AG04449 (cell line): ENCODE measurements at regions of chr1 and their contacts with region 1.

Region 1: GRCh38 chr1:111507411-111508201 is 4.2 kb upstream of the ADORA3 start:
- DNase-seq: no peak
- H3K4me3 ChIP-seq: peak overlapping the region; percentile 36
- CTCF ChIP-seq: peak; percentile 45

Region 2: GRCh38 chr1:111378791-111379190 is 128.8 kb before region 1 on chr1:
- CTCF ChIA-PET with region 1: no interaction called
- POLR2A ChIA-PET with region 1: no interaction called
- DNase-seq: no peak
- H3K4me3 ChIP-seq: no peak overlapping the region
- CTCF ChIP-seq: no peak

Region 3: GRCh38 chr1:111481387-111482221 is 26.0 kb before region 1 on chr1:
- CTCF ChIA-PET with region 1: interaction called, 61 read pairs
- POLR2A ChIA-PET with region 1: no interaction called
- DNase-seq: peak; percentile 3
- H3K4me3 ChIP-seq: no peak overlapping the region
- CTCF ChIP-seq: peak; percentile 86

Region 4: GRCh38 chr1:111563619-111564018 is 56.0 kb after region 1 on chr1:
- CTCF ChIA-PET with region 1: interaction called, 16 read pairs
- POLR2A ChIA-PET with region 1: no interaction called
- DNase-seq: peak; percentile 34
- H3K4me3 ChIP-seq: no peak overlapping the region
- CTCF ChIP-seq: no peak

Region 5: GRCh38 chr1:111625263-111625662 is 117.7 kb after region 1 on chr1:
- CTCF ChIA-PET with region 1: interaction called, 24 read pairs
- POLR2A ChIA-PET with region 1: no interaction called
- DNase-seq: no peak
- H3K4me3 ChIP-seq: no peak overlapping the region
- CTCF ChIP-seq: no peak

Region 6: GRCh38 chr1:111690306-111690617 is 182.7 kb after region 1 on chr1:
- CTCF ChIA-PET with region 1: interaction called, 34 read pairs
- POLR2A ChIA-PET with region 1: interaction called, 3 read pairs
- DNase-seq: peak; percentile 76
- H3K4me3 ChIP-seq: no peak overlapping the region
- CTCF ChIP-seq: no peak

Region 7: GRCh38 chr1:111747282-111747734 is 239.7 kb after region 1 on chr1:
- CTCF ChIA-PET with region 1: interaction called, 24 read pairs
- POLR2A ChIA-PET with region 1: no interaction called
- DNase-seq: no peak
- H3K4me3 ChIP-seq: no peak overlapping the region
- CTCF ChIP-seq: peak; percentile 78